A673 (cell line): ENCODE measurements at regions of chr9 and their contacts with region 1.

Region 1: GRCh38 chr9:30713243-30713642 is 1671.2 kb upstream of the ACO1 start:
- DNase-seq: no peak
- H3K4me3 ChIP-seq: no peak overlapping the region
- H3K27ac ChIP-seq: no peak overlapping the region
- H3K4me1 ChIP-seq: no peaks in the 10 kb centered on the region
- H3K27me3 ChIP-seq: no peaks in the 10 kb centered on the region
- CTCF ChIP-seq: no peak

Region 2: GRCh38 chr9:30774326-30774725 is 61.1 kb after region 1 on chr9:
- CTCF ChIA-PET with region 1: no interaction called
- POLR2A ChIA-PET with region 1: no interaction called
- intact Hi-C with region 1: loop called (anchors 10 kb)
- DNase-seq: peak; percentile 4
- H3K4me3 ChIP-seq: no peak overlapping the region
- H3K27ac ChIP-seq: no peak overlapping the region
- H3K4me1 ChIP-seq: no peaks in the 10 kb centered on the region
- H3K27me3 ChIP-seq: no peaks in the 10 kb centered on the region
- CTCF ChIP-seq: 0 out of 2 replicates have a peak, but pooled peaks have one; percentile 12

Region 3: DNA sequence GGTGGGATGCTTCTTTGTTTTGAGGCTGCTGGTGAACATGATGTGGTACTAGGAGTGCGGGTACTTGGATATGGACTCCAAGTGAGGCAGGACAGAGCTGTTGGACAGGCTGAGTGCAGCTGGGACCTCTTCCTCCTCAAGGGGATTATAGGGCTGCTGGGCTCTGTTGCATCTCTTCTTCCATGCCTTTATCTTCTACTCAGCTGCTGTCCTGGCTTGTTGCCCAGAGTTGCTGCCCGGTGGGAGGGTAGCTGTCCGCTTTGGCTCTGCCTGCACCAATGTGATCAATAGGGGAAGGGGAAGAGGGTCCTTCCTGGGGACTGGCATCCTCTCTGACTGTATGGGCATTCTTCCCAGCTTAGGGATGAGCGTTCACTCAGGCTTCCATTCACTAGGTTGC is 453.3 kb after region 1 on chr9:
- CTCF ChIA-PET with region 1: no interaction called
- POLR2A ChIA-PET with region 1: no interaction called
- intact Hi-C with region 1: no loop called
- DNase-seq: peak; percentile 22
- H3K4me3 ChIP-seq: no peak overlapping the region
- H3K27ac ChIP-seq: no peak overlapping the region
- H3K4me1 ChIP-seq: no peaks in the 10 kb centered on the region
- H3K27me3 ChIP-seq: no peaks in the 10 kb centered on the region
- CTCF ChIP-seq: no peak